ENCODE measurements at regions of chr3 and their contacts with region 1.

Region 1: GRCh38 chr3:98022978-98023820 is 11.9 kb downstream of the GABRR3 start:
- DNase-seq: peak; percentile 66
- H3K4me3 ChIP-seq: no peak overlapping the region
- H3K27ac ChIP-seq: no peak overlapping the region
- H3K4me1 ChIP-seq: no peaks in the 10 kb centered on the region
- H3K27me3 ChIP-seq: peaks cover 5 to 8% of the 10 kb centered on the region in 2 experiments
- CTCF ChIP-seq: peak; percentile 80 to 88
- POLR2A ChIP-seq: no peak

Region 2: DNA sequence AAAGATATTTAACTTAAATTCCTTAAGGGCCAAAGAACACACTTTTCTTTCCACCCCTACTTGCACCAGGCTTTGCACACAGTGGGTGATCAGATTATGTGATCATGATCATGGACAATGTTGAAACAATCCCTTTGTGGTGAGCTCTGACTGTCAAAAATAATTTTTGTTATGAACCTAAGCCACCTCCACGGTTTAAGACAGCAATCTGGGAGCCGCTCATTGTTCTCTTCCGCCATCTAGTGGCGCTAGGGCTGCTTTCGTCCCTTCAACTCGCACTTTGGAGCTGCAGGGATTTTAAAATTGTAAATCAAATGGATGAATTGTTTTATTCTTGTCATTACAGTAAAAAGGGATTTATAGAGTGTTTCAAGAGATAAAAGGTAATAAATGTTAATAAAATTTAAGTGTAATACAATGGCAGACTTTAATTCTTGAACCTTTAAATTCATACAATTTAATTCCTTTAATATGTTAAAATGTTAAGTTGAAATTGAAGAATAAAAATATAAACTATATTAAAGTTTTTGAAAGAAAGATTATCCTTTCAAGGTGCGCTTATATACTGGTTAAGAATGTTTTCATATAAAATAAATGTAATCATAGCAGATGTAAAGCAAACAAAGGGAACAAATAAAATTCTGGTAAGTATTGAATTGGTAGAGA is 303.9 kb before region 1 on chr3:
- CTCF ChIA-PET with region 1: interaction called, 63 read pairs
- POLR2A ChIA-PET with region 1: no interaction called
- dilution Hi-C with region 1: no loop called
- intact Hi-C with region 1: loop called (anchors 2 kb)
- DNase-seq: peak; percentile 77
- H3K4me3 ChIP-seq: no peak overlapping the region
- H3K27ac ChIP-seq: no peak overlapping the region
- H3K4me1 ChIP-seq: no peaks in the 10 kb centered on the region
- H3K27me3 ChIP-seq: peaks cover 1 to 6% of the 10 kb centered on the region in 2 experiments
- CTCF ChIP-seq: peak; percentile 82 to 93
- POLR2A ChIP-seq: no peak

Region 3: DNA sequence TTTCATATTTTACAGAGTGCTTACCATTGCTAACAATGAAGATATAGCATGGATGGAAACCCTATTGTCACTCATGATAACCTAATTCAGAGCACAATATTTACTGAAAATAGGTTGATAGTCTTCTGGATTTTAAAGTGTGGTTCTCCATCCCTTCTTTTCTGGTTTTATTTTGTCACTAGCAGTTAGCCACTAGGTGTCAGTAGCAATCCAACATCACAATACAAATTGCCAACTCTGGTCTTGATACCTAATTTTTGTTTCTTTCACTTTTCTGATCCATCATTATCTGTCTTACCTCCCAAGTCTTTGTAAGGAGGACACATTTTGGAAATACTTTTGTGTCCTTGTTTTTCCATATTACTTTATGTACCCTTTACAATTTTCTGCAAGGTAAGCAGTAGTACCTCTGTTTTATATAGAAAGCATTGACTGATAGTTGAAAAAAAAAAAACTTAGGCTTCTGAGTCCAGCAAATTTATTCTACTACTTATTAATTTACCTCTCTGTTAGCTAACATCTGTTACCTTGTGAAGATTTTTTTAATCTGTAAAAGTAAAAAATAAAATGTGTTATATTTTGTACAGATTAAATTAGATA is 229.7 kb before region 1 on chr3:
- CTCF ChIA-PET with region 1: interaction called, 138 read pairs
- POLR2A ChIA-PET with region 1: no interaction called
- dilution Hi-C with region 1: no loop called
- intact Hi-C with region 1: loop called (anchors 1 kb)
- DNase-seq: peak; percentile 65
- H3K4me3 ChIP-seq: no peak overlapping the region
- H3K27ac ChIP-seq: no peak overlapping the region
- H3K4me1 ChIP-seq: no peaks in the 10 kb centered on the region
- H3K27me3 ChIP-seq: no peaks in the 10 kb centered on the region
- CTCF ChIP-seq: peak; percentile 53 to 64
- POLR2A ChIP-seq: no peak

Region 4: DNA sequence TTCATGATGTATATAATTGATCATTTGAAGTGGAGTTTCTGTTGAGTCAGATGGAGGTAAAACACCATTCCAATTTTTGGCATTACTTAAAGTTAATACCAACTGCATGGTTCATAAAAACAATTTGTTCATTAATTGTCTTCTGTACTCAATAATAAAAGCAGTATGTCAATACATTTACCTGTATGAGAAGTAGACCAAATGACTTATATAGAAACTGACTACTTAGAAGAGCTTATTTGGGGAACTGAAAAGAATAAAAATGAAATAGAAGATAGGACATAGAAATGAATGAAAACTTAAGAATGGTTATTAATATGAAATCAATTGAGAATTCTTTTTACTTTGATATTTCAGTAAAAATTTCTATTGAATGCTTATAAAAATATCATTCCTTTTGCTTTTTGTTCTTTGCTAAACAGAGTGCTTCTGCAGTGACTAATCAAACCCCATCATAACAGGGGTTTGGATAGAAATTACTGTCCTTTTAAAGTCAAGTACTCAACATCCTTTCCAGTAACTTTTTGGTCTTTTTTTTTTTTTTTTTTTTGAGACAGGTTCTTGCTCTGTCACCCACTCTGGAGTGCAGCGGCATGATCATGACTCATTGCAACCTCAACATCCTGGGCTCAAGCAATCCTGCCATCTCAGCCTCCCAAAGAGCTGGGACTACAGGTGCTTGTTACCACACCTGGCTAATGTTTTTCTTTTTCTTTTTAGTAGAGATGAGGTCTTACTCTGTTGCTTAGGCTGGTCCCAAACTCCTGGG is 207.9 kb before region 1 on chr3:
- CTCF ChIA-PET with region 1: interaction called, 14 read pairs
- POLR2A ChIA-PET with region 1: no interaction called
- dilution Hi-C with region 1: no loop called
- intact Hi-C with region 1: no loop called
- DNase-seq: no peak
- H3K4me3 ChIP-seq: no peak overlapping the region
- H3K27ac ChIP-seq: no peak overlapping the region
- H3K4me1 ChIP-seq: no peaks in the 10 kb centered on the region
- H3K27me3 ChIP-seq: no peaks in the 10 kb centered on the region
- CTCF ChIP-seq: no peak
- POLR2A ChIP-seq: no peak

Region 5: GRCh38 chr3:97940034-97940433 is 83.2 kb before region 1 on chr3:
- CTCF ChIA-PET with region 1: interaction called, 10 read pairs
- POLR2A ChIA-PET with region 1: no interaction called
- dilution Hi-C with region 1: no loop called
- intact Hi-C with region 1: no loop called
- DNase-seq: peak; percentile 26
- H3K4me3 ChIP-seq: no peak overlapping the region
- H3K27ac ChIP-seq: no peak overlapping the region
- H3K4me1 ChIP-seq: no peaks in the 10 kb centered on the region
- H3K27me3 ChIP-seq: no peaks in the 10 kb centered on the region
- CTCF ChIP-seq: no peak
- POLR2A ChIP-seq: no peak

Region 6: GRCh38 chr3:97983933-97984491 is 39.2 kb before region 1 on chr3:
- CTCF ChIA-PET with region 1: interaction called, 13 read pairs
- POLR2A ChIA-PET with region 1: no interaction called
- dilution Hi-C with region 1: no loop called
- intact Hi-C with region 1: no loop called
- DNase-seq: no peak
- H3K4me3 ChIP-seq: no peak overlapping the region
- H3K27ac ChIP-seq: no peak overlapping the region
- H3K4me1 ChIP-seq: peaks cover 4% of the 10 kb centered on the region
- H3K27me3 ChIP-seq: peaks cover 2 to 5% of the 10 kb centered on the region in 2 experiments
- CTCF ChIP-seq: no peak
- POLR2A ChIP-seq: no peak

Region 7: DNA sequence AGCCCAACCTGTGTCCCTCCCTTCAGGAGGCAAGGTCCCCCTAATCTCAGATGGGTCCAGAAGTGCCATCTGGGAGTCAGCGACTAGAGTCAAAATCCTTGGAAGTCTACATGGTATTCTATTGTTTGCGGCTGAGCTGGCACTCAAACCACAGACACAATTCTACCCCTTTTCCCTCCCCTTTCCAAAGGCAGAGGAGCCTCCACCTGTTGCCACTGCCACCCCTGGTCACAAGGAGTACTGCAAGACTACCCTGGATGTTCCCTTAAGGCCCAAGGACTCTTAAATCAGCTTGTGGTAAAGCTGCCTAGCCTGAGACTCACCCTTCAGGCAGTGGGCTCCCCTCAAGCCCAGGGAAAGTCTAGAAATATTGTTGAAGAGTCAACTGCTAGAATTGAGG is 236.5 kb after region 1 on chr3:
- CTCF ChIA-PET with region 1: no interaction called
- POLR2A ChIA-PET with region 1: no interaction called
- dilution Hi-C with region 1: no loop called
- intact Hi-C with region 1: no loop called
- DNase-seq: no peak
- H3K4me3 ChIP-seq: no peak overlapping the region
- H3K27ac ChIP-seq: no peak overlapping the region
- H3K4me1 ChIP-seq: no peaks in the 10 kb centered on the region
- H3K27me3 ChIP-seq: no peaks in the 10 kb centered on the region
- CTCF ChIP-seq: peak; percentile 11 to 36
- POLR2A ChIP-seq: no peak

Measured in endothelial cell of umbilical vein (primary cell).